ENCODE measurements at regions of chr12 and their contacts with region 1.

Region 1: GRCh38 chr12:56377310-56377988 is 14.8 kb upstream of the APOF start:
- DNase-seq: peak; percentile 57 to 89 (median 74)
- ATAC-seq: peak; percentile 95
- H3K4me3 ChIP-seq: no peak overlapping the region
- H3K27ac ChIP-seq: peak overlapping the region; percentile 83
- H3K4me1 ChIP-seq: peaks cover 22 to 24% of the 10 kb centered on the region in 2 experiments; a peak in 4 of 5 replicates
- H3K27me3 ChIP-seq: no peaks in the 10 kb centered on the region
- CTCF ChIP-seq: peak; percentile 71 to 79 (median 74)
- EP300 ChIP-seq: peak; percentile 60; the same call in 1 of the 2 replicates
- POLR2A ChIP-seq: no peak; the same call in 1 of the 2 replicates
- RAD21 ChIP-seq: peak; percentile 83 to 93

Region 2: GRCh38 chr12:56315622-56316473 is 61.6 kb before region 1 on chr12 and contains the start of gene CNPY2:
- CTCF ChIA-PET with region 1: no interaction called
- POLR2A ChIA-PET with region 1: no interaction called
- in situ Hi-C with region 1: no loop called
- intact Hi-C with region 1: loop called (anchors 5 kb)
- DNase-seq: peak; percentile 94 to 98 (median 95)
- ATAC-seq: peak; percentile 96
- H3K4me3 ChIP-seq: peak within 1 kb of the TSS; percentile 72
- H3K27ac ChIP-seq: peak within 1 kb of the TSS; percentile 77
- H3K4me1 ChIP-seq: peaks cover 11% of the 10 kb centered on the region in 2 experiments; a peak in 4 of 5 replicates
- H3K27me3 ChIP-seq: no peaks in the 10 kb centered on the region
- CTCF ChIP-seq: peak; percentile 69 to 76 (median 75)
- EP300 ChIP-seq: no peak
- POLR2A ChIP-seq: peak; percentile 88
- RAD21 ChIP-seq: peak; percentile 46 to 83
- polyA plus RNA-seq, gene CNPY2: 33.8 to 45.0 TPM

Region 3: GRCh38 chr12:56398324-56398723 is 20.9 kb after region 1 on chr12:
- CTCF ChIA-PET with region 1: no interaction called
- POLR2A ChIA-PET with region 1: no interaction called
- in situ Hi-C with region 1: no loop called
- intact Hi-C with region 1: loop called (anchors 2 kb)
- DNase-seq: no peak
- ATAC-seq: no peak
- H3K4me3 ChIP-seq: no peak overlapping the region
- H3K27ac ChIP-seq: no peak overlapping the region
- H3K4me1 ChIP-seq: no peaks in the 10 kb centered on the region; a peak in 1 of 5 replicates
- H3K27me3 ChIP-seq: 0 out of 5 replicates have a peak, but pooled peaks cover 0 to 6% of the 10 kb centered on the region in 2 experiments
- CTCF ChIP-seq: no peak
- EP300 ChIP-seq: no peak
- POLR2A ChIP-seq: no peak
- RAD21 ChIP-seq: no peak

Region 4: DNA sequence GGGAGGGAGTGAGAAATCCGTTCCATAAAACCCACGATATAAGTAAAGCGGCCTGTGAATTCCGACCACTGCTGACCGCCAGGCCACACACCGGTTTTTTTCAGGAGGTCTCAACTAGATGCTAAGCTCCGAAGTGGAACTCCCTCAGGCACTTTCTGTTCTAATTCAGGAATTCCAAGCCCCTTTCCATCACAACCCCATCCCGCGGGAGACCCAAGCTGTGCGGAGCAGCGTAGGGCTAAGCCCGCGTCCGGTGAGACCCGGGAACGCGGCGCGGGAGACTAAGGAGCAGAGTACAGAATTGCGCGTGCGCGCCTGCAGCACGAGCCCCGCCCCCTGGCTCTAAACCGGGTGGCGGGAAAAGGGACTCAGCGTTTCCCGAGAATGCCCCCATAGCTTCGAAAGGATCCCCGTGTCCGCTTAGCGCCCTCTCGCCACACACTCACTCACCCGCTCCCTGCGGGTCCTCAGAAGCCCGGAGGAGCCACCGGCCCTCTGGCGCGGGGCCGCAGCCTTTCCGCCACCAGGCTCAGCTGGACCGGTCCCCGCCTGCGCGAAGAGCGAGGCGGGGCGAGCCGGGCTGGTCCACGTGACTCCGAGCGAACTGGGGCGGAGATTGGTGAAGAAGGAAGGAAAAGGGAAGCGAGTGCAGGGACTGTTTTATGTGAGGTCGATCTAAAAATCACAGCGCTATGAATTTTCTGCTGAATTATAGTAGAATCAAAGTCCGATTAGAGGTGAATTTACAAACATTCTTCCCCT is 71.6 kb after region 1 on chr12 and contains the start of gene TIMELESS:
- CTCF ChIA-PET with region 1: no interaction called
- POLR2A ChIA-PET with region 1: interaction called, 4 read pairs
- in situ Hi-C with region 1: no loop called
- intact Hi-C with region 1: loop called (anchors 5 kb)
- DNase-seq: peak; percentile 94 to 95 (median 95)
- ATAC-seq: peak; percentile 96
- H3K4me3 ChIP-seq: peak within 1 kb of the TSS; percentile 52
- H3K27ac ChIP-seq: peak within 1 kb of the TSS; percentile 91
- H3K4me1 ChIP-seq: peaks cover 11 to 19% of the 10 kb centered on the region in 2 experiments
- H3K27me3 ChIP-seq: no peaks in the 10 kb centered on the region
- CTCF ChIP-seq: 0 out of 6 replicates have a peak, but pooled peaks of 1 of the 3 experiments have one; percentile 15
- EP300 ChIP-seq: no peak; the same call in 1 of the 2 replicates
- POLR2A ChIP-seq: peak; percentile 95
- RAD21 ChIP-seq: no peak
- polyA plus RNA-seq, gene TIMELESS: 11.9 to 17.8 TPM

Measured in K562 (cell line).